ENCODE measurements at regions of chr3 and their contacts with region 1.

Region 1: DNA sequence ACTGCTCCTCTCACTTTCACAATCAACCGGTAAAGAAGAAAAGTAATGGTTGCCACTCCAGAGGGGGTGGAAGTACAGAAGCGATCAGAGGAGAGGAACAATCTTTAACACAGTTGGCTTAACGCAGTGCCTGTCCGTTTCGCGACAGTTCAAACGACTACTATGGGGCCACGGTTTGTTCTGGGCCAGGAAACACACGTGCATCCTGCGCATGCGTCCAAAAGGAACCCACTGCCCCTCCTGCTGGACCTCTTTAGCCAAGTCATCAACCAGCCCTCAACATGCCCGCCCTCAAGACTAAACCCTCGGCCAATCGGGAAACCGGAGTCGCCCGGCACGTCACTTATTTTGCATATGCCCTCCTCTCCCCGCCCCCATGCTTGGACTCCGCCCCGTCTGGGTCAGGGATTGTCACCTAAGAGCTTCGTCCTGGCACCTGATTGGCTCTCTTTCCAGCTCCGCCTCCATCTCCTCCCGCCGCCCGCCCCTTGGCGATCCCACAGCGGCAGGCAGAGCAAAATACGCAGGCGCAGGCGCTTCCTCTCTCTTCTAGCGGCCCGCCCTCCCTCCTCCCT is 345 bp upstream of the CDV3 start:
- DNase-seq: peak; percentile 99
- ATAC-seq: peak; percentile 90
- H3K4me3 ChIP-seq: peak overlapping the region; percentile 63 to 92 (median 80); a peak in 5 of 6 replicates
- H3K27ac ChIP-seq: peak overlapping the region; percentile 93
- H3K4me1 ChIP-seq: peaks cover 72% of the 10 kb centered on the region
- H3K27me3 ChIP-seq: no peaks in the 10 kb centered on the region
- CTCF ChIP-seq: peak; percentile 39
- EP300 ChIP-seq: no peak
- POLR2A ChIP-seq: peak; percentile 84 to 96
- RAD21 ChIP-seq: 0 out of 2 replicates have a peak, but pooled peaks have one; percentile 4

Region 2: GRCh38 chr3:132722164-132723024 is 850.7 kb before region 1 on chr3 and contains the start of gene NPHP3:
- CTCF ChIA-PET with region 1: no interaction called
- POLR2A ChIA-PET with region 1: no interaction called
- in situ Hi-C with region 1: no loop called
- intact Hi-C with region 1: loop called (anchors 10 kb)
- DNase-seq: peak; percentile 84
- ATAC-seq: peak; percentile 91
- H3K4me3 ChIP-seq: peak within 1 kb of the TSS; percentile 86 to 90 (median 89)
- H3K27ac ChIP-seq: peak within 1 kb of the TSS; percentile 85
- H3K4me1 ChIP-seq: peaks cover 35% of the 10 kb centered on the region
- H3K27me3 ChIP-seq: no peaks in the 10 kb centered on the region
- CTCF ChIP-seq: peak; percentile 15; the same call in 1 of the 2 replicates
- EP300 ChIP-seq: no peak
- POLR2A ChIP-seq: peak; percentile 77 to 96
- RAD21 ChIP-seq: no peak
- total RNA-seq, gene NPHP3: 8.4 and 11.0 TPM in 2 replicates

Region 3: GRCh38 chr3:133452641-133453319 is 120.4 kb before region 1 on chr3:
- CTCF ChIA-PET with region 1: no interaction called
- POLR2A ChIA-PET with region 1: interaction called, 10 read pairs
- in situ Hi-C with region 1: no loop called
- intact Hi-C with region 1: no loop called
- DNase-seq: peak; percentile 78
- ATAC-seq: peak; percentile 94
- H3K4me3 ChIP-seq: peak overlapping the region in 1 of 3 experiments; percentile 29; a peak in 1 of 6 replicates
- H3K27ac ChIP-seq: peak overlapping the region; percentile 43
- H3K4me1 ChIP-seq: peaks cover 39% of the 10 kb centered on the region
- H3K27me3 ChIP-seq: no peaks in the 10 kb centered on the region
- CTCF ChIP-seq: no peak
- EP300 ChIP-seq: peak in 1 of 2 experiments; percentile 65; a peak in 2 of 4 replicates
- POLR2A ChIP-seq: no peak
- RAD21 ChIP-seq: no peak

Region 4: DNA sequence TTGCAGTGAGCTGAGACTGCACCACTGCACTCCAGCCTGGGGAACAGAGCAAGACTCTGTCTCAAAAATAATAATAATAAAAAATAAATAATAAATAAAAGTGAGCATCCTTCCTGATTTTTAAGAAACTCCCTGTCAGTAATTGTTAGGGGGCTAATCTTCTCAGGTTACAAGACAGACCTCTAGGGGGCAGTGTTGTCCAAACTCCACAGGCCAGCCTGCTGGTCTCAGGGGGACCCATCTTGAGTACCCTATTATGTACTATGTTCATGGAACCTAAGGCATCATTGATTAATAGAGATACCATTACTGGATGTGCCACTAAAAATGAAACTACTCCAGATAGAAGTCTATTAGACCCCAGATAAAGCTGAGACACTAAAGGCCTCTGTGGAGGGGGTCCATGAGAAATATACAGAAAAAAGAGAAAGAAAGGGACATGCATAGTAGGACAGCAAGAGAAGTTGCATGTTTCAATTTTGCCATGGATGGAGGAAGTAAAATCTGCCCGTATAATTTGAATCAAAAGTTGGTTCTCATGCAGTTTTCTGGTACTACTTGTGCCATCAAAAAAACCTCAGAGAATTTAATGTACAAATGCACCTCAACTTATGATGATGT is 85.1 kb before region 1 on chr3:
- CTCF ChIA-PET with region 1: interaction called, 17 read pairs
- POLR2A ChIA-PET with region 1: interaction called, 22 read pairs
- in situ Hi-C with region 1: loop called (anchors 5 kb)
- intact Hi-C with region 1: no loop called
- DNase-seq: peak; percentile 20
- ATAC-seq: no peak
- H3K4me3 ChIP-seq: no peak overlapping the region
- H3K27ac ChIP-seq: no peak overlapping the region
- H3K4me1 ChIP-seq: peaks cover 9% of the 10 kb centered on the region
- H3K27me3 ChIP-seq: no peaks in the 10 kb centered on the region
- CTCF ChIP-seq: peak; percentile 46
- EP300 ChIP-seq: no peak
- POLR2A ChIP-seq: no peak
- RAD21 ChIP-seq: no peak

Region 5: GRCh38 chr3:133540896-133541674 is 32.1 kb before region 1 on chr3:
- CTCF ChIA-PET with region 1: no interaction called
- POLR2A ChIA-PET with region 1: interaction called, 14 read pairs
- in situ Hi-C with region 1: no loop called
- intact Hi-C with region 1: loop called (anchors 1 kb)
- DNase-seq: peak; percentile 73
- ATAC-seq: peak; percentile 59
- H3K4me3 ChIP-seq: peak overlapping the region in 1 of 3 experiments; percentile 11; a peak in 1 of 6 replicates
- H3K27ac ChIP-seq: no peak overlapping the region
- H3K4me1 ChIP-seq: peaks cover 54% of the 10 kb centered on the region
- H3K27me3 ChIP-seq: no peaks in the 10 kb centered on the region
- CTCF ChIP-seq: no peak
- EP300 ChIP-seq: 0 out of 4 replicates have a peak, but pooled peaks of 1 of the 2 experiments have one; percentile 19
- POLR2A ChIP-seq: no peak
- RAD21 ChIP-seq: no peak

Region 6: GRCh38 chr3:133606342-133606741 is 33.2 kb after region 1 on chr3:
- CTCF ChIA-PET with region 1: no interaction called
- POLR2A ChIA-PET with region 1: interaction called, 11 read pairs
- in situ Hi-C with region 1: no loop called
- intact Hi-C with region 1: no loop called
- DNase-seq: peak; percentile 38
- ATAC-seq: no peak
- H3K4me3 ChIP-seq: no peak overlapping the region
- H3K27ac ChIP-seq: peak overlapping the region; percentile 37
- H3K4me1 ChIP-seq: peaks cover 17% of the 10 kb centered on the region
- H3K27me3 ChIP-seq: no peaks in the 10 kb centered on the region
- CTCF ChIP-seq: no peak
- EP300 ChIP-seq: no peak
- POLR2A ChIP-seq: no peak
- RAD21 ChIP-seq: no peak

Region 7: DNA sequence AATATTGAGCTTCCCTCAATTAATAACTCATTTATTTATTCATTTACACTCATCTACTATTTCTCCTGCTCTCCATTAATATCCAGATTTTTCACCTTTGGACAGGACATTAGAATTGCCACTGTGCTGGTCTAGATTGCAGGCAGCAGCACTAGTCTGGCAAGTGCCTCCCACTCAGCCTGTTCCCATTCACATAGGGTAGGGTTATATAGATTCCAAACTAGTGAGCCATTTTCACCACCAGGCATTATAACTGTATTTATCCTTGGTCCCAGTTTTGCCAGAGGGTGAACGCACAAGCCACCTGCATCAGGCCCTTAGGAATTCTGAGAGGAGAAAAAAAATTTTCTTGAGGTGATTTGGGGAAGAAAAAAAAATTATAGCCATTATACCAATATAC is 868.2 kb after region 1 on chr3:
- CTCF ChIA-PET with region 1: no interaction called
- POLR2A ChIA-PET with region 1: no interaction called
- in situ Hi-C with region 1: no loop called
- intact Hi-C with region 1: no loop called
- DNase-seq: no peak
- ATAC-seq: no peak
- H3K4me3 ChIP-seq: no peak overlapping the region
- H3K27ac ChIP-seq: no peak overlapping the region
- H3K4me1 ChIP-seq: peaks cover 6% of the 10 kb centered on the region; the same call in 1 of the 2 replicates
- H3K27me3 ChIP-seq: peaks cover 0 to 11% of the 10 kb centered on the region in 2 experiments; a peak in 3 of 5 replicates
- CTCF ChIP-seq: no peak
- EP300 ChIP-seq: no peak
- POLR2A ChIP-seq: no peak
- RAD21 ChIP-seq: no peak

Measured in HepG2 (cell line).